ENCODE measurements at regions of chr19 and their contacts with region 1.

Region 1: GRCh38 chr19:50669302-50670101 is 20.3 kb downstream of the C19orf81 start:
- DNase-seq: peak; percentile 61 to 69
- ATAC-seq: peak; percentile 48 to 63; a peak in 5 of 6 replicates
- H3K4me3 ChIP-seq: no peak overlapping the region; the same call in 2 of the 3 replicates
- H3K27ac ChIP-seq: no peak overlapping the region
- H3K4me1 ChIP-seq: peaks cover 23% of the 10 kb centered on the region
- CTCF ChIP-seq: peak; percentile 91
- EP300 ChIP-seq: no peak
- POLR2A ChIP-seq: no peak
- RAD21 ChIP-seq: peak; percentile 53 to 65

Region 2: GRCh38 chr19:50590191-50590590 is 79.3 kb before region 1 on chr19:
- CTCF ChIA-PET with region 1: interaction called, 11 read pairs
- POLR2A ChIA-PET with region 1: no interaction called
- DNase-seq: no peak
- ATAC-seq: no peak
- H3K4me3 ChIP-seq: no peak overlapping the region
- H3K27ac ChIP-seq: no peak overlapping the region
- H3K4me1 ChIP-seq: no peaks in the 10 kb centered on the region
- CTCF ChIP-seq: no peak
- EP300 ChIP-seq: no peak
- POLR2A ChIP-seq: no peak
- RAD21 ChIP-seq: no peak

Region 3: DNA sequence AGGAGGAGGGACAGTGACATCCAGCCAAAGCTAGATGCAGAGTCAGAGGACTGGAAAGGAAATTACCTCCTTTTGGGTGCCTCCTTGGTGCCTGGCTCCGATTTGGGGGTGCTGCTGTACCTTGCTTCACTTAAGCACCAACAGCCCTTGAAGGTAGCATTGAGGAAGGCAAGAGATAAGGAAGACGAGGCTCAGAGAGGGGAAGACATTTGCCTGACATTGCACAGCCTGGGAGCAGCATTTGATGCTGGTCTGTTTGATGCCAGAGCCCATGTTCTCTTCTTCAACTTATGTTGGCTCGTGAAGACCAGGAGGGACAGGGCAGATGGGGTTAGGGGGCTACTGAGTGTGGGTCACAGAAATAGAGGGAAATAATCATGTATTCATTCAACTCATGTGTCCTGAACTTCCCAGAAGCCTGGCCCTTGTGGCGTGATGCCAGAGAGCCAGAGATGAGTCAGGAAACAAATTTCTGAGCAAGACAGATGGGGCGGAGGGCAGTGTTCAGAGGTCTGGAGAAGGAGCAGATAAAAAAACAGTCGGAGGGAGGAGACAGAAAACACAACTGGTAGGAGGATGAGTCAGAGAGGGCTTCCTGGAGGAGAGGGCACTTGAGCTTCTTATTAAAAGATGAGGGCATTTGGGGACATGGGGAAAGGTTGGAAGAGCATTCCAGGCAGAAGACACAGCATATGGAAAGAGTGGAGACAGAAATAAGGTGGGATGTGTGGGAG is 23.3 kb before region 1 on chr19:
- CTCF ChIA-PET with region 1: interaction called, 12 read pairs
- POLR2A ChIA-PET with region 1: no interaction called
- DNase-seq: peak; percentile 83
- ATAC-seq: peak; percentile 67 to 80
- H3K4me3 ChIP-seq: 0 out of 3 replicates have a peak overlapping the region, but pooled peaks have one; percentile 0
- H3K27ac ChIP-seq: peak overlapping the region; percentile 55 to 62; a peak in 4 of 6 replicates
- H3K4me1 ChIP-seq: peaks cover 20% of the 10 kb centered on the region
- CTCF ChIP-seq: no peak
- EP300 ChIP-seq: no peak
- POLR2A ChIP-seq: no peak
- RAD21 ChIP-seq: no peak

Region 4: DNA sequence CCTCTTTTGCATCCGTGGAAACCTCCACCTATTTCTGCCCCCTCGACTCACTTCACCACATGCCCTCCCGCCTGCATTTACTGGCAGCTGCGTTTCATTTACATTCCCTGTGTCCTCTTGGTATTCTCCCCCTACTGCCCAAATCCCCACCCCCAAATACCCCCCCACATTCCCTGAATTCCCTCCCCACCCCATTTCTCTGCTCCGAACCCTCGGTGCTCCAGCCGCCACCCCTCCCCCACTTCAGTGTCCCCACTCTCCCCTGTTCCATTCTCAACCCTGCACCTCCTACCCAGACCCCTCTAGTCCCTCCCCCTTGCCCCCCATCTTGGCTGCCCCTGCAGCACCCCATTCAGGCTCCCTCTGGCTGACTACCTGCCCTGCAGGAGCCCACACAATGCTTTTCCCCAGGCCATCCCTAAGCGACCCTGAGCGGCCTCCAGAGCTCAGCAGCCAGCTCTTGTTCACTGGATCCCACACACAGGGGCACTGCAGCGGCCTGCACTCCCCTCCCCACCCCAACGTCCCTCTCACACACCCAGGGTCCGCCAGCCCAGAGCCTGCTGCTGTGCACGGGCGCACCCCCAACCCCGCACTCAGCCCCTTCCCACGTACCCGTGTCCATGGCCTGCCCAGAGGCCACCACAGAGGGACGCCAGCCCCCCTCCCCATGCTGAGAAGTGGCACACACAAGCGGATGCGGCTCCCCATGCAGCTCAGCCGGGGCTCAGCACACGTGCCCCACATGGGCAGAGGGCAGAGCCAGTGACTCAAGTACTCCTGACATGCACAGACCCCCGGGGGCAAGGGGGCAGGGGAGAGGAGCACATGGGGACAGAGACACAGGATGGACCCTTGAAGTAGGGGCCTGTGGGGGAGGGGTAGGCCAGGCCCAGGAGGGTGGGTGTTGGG is 23.8 kb after region 1 on chr19:
- CTCF ChIA-PET with region 1: interaction called, 36 read pairs
- POLR2A ChIA-PET with region 1: interaction called, 4 read pairs
- DNase-seq: no peak
- ATAC-seq: no peak
- H3K4me3 ChIP-seq: no peak overlapping the region
- H3K27ac ChIP-seq: no peak overlapping the region
- H3K4me1 ChIP-seq: peaks cover 12% of the 10 kb centered on the region; the same call in 2 of the 3 replicates
- CTCF ChIP-seq: no peak
- EP300 ChIP-seq: no peak
- POLR2A ChIP-seq: no peak
- RAD21 ChIP-seq: no peak

Region 5: DNA sequence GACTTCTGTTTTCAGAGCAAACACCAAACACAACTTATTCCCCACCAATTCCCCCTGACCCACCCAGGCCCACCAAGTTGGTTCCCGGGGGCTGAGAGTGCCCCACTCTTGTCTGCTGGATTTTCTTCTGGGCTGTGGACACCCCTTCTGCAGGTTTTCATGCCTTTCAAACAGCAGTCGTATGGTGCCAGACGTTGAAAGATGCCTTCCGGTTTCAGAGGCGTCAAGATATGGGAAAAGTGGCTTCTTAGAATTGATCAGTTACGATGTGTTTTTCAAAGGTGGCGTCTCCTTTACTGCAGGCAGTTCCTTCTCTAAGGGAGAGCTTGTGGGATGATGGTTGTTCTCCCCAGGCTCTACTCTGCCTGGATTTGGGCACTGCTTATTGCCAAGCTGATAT is 66.4 kb after region 1 on chr19:
- CTCF ChIA-PET with region 1: interaction called, 11 read pairs
- POLR2A ChIA-PET with region 1: no interaction called
- DNase-seq: no peak
- ATAC-seq: no peak
- H3K4me3 ChIP-seq: no peak overlapping the region
- H3K27ac ChIP-seq: no peak overlapping the region
- H3K4me1 ChIP-seq: no peaks in the 10 kb centered on the region
- CTCF ChIP-seq: no peak
- EP300 ChIP-seq: no peak
- POLR2A ChIP-seq: no peak
- RAD21 ChIP-seq: no peak